Activated CD8-positive, alpha-beta T cell treated with anti-CD3 and anti-CD28 coated beads, Interleukin-2, amount 10 ng/mL, durations not matched to agents 7 days and 5 days (primary cell): ENCODE measurements at regions of chr12 and their contacts with region 1.

Region 1: GRCh38 chr12:98725476-98726247 is 80.6 kb downstream of the APAF1 start:
- DNase-seq: peak; percentile 67
- ATAC-seq: peak; percentile 88
- H3K4me3 Mint-ChIP-seq: no peak overlapping the region
- H3K27ac Mint-ChIP-seq: no peak overlapping the region
- H3K4me1 Mint-ChIP-seq: peaks cover 4% of the 10 kb centered on the region
- H3K27me3 Mint-ChIP-seq: no peaks in the 10 kb centered on the region

Region 2: DNA sequence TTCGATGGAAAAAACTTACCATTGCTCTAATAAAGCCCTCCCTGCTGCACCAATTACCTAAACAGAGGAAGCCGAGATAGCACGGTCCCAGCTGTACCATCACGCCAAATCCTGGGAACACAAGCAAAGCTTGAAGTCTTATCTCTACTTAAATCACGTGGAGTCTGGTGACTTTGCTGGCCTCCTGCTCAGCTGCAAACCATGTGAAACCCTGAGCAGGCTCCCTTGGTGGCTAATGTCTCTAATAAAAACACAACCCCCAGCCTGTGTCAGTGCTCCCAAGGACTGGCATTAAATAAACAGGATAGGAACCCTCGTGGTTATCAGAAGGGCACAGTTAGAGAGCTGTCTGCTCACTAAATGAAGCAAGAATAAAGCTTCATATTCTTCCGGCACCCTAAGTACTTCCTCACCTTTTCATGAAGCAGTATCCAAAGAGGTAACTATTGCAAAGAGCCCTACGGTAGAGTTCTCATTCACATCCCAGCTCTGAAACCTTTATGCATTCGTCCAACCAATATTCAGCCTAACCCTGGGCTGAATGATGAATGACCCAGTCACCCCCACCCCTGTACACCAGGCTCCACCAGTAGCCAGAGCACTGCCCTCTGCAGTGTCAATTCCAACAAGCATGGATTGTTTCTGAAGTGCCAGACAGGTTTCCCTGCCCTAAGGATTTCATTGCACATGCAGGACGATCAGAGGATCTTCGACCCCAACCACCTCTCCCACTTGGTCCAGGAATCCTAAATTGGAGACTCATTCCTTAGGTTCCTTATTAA is 663.0 kb before region 1 on chr12:
- CTCF ChIA-PET with region 1: no interaction called
- POLR2A ChIA-PET with region 1: no interaction called
- DNase-seq: no peak
- ATAC-seq: no peak
- H3K4me3 Mint-ChIP-seq: no peak overlapping the region
- H3K27ac Mint-ChIP-seq: no peak overlapping the region
- H3K4me1 Mint-ChIP-seq: no peaks in the 10 kb centered on the region
- H3K27me3 Mint-ChIP-seq: no peaks in the 10 kb centered on the region

Region 3: GRCh38 chr12:98319716-98320425 is 405.8 kb before region 1 on chr12:
- CTCF ChIA-PET with region 1: no interaction called
- POLR2A ChIA-PET with region 1: no interaction called
- DNase-seq: no peak
- ATAC-seq: no peak
- H3K4me3 Mint-ChIP-seq: no peak overlapping the region
- H3K27ac Mint-ChIP-seq: no peak overlapping the region
- H3K4me1 Mint-ChIP-seq: no peaks in the 10 kb centered on the region
- H3K27me3 Mint-ChIP-seq: peaks cover 11% of the 10 kb centered on the region

Region 4: DNA sequence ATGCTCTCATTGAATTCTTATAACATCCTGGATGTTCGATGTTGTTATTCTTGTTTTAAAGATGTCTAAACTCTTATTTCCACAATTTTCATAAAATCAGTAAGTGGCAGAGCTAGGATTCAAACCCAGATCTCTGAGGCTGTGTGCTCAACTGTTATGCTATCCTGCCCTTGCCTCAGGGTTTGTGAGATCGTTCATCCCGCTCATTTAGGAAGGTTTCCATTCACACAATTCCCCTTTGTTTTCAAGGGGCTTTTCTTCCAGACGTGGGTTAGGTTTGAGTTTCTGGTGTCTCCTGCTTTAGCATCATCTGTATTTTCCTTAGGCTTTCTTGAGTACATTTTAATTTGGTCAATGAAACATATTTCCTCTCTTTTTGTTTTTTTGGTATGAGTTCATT is 11.2 kb before region 1 on chr12:
- CTCF ChIA-PET with region 1: interaction called, 11 read pairs
- POLR2A ChIA-PET with region 1: no interaction called
- DNase-seq: no peak
- ATAC-seq: no peak
- H3K4me3 Mint-ChIP-seq: no peak overlapping the region
- H3K27ac Mint-ChIP-seq: no peak overlapping the region
- H3K4me1 Mint-ChIP-seq: no peaks in the 10 kb centered on the region
- H3K27me3 Mint-ChIP-seq: no peaks in the 10 kb centered on the region

Region 5: DNA sequence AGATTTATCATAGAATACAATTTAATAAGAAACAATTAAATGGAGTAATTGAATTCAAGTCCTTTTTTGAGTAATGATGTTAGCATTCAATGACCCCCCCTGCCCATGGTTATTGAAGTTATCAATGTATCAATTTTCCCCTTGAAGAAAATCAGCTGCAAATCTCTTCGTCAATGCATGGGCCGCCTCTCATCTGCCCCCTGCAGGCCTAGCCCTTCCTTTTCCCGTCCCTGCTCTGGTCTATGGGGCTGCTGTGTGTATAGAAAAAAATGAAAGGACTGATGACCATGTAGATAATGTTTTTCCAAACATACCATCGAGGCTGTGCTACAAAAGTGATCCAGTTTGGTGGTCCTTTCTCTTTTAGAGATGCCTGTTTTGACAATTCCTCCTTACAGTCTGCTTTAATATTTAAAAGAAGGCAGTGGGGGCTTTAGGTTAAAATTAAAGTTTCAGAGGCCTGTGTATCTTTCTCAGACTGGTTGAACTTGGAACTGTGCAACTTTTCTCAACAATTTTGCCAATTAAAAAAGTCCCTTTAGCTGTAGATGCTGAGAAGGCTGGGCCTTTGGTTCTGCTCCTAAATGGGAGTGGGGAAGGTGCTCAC is 17.8 kb after region 1 on chr12:
- CTCF ChIA-PET with region 1: interaction called, 11 read pairs
- POLR2A ChIA-PET with region 1: no interaction called
- DNase-seq: peak; percentile 55
- ATAC-seq: peak; percentile 50
- H3K4me3 Mint-ChIP-seq: no peak overlapping the region
- H3K27ac Mint-ChIP-seq: no peak overlapping the region
- H3K4me1 Mint-ChIP-seq: peaks cover 12% of the 10 kb centered on the region
- H3K27me3 Mint-ChIP-seq: peaks cover 27% of the 10 kb centered on the region